ENCODE measurements at regions of chr22 and their contacts with region 1.

Region 1: GRCh38 chr22:40525249-40525884 is 111.2 kb downstream of the MRTFA start:
- DNase-seq: peak; percentile 60
- H3K4me3 ChIP-seq: no peak overlapping the region
- H3K27ac ChIP-seq: no peak overlapping the region
- H3K4me1 ChIP-seq: no peaks in the 10 kb centered on the region
- H3K27me3 ChIP-seq: no peaks in the 10 kb centered on the region
- CTCF ChIP-seq: peak; percentile 66

Region 2: GRCh38 chr22:40645579-40646197 is 120.3 kb after region 1 on chr22:
- intact Hi-C with region 1: loop called (anchors 5 kb)
- DNase-seq: no peak
- H3K4me3 ChIP-seq: no peak overlapping the region
- H3K27ac ChIP-seq: peak overlapping the region; percentile 34
- H3K4me1 ChIP-seq: no peaks in the 10 kb centered on the region
- H3K27me3 ChIP-seq: no peaks in the 10 kb centered on the region
- CTCF ChIP-seq: no peak